Activated naive CD4-positive, alpha-beta T cell treated with anti-CD3 and anti-CD28 coated beads, Interleukin-2, amount 10 ng/mL, durations not matched to agents 7 days and 5 days (primary cell): ENCODE measurements at regions of chr19 and their contacts with region 1.

Region 1: DNA sequence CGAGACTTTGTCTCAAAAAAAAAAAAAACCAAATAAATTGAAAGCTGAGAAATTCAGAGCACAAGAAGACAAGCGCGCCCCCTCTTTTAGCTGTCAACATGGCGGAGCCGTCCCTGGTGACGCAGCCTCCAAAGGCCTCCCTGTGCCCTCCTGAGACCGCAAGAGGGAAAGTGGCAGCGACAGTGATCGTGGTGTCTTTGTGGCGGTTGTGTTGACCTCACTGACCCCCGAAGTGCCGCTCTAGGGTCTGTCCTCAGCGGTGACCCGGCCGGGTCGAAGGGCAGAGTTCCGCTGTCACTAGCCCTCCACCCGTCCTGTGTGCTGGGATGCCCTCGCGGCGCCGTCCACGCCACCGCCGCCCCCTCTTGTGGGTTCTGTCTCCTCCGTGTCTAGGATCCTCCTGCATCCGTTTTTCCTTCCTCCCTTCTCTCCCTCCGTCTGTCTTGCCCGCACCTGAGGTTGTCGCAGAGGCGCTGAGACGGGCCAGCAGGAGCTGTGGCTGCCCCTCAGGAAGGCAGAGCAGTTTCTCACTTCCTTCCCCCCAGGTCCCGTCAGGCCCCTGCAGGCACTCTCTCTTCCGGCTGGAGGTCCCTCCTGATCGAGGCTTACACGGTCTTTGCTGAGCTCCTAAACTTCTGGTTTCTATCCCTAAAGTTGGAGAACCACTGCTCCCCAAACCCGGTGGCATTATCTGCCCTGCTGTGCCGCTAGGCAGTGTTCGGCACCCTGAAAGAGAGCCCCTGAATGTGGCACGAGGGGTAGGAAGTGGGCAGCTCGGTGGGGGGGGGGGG is 7.2 kb downstream of the UHRF1 start:
- DNase-seq: peak; percentile 62
- H3K4me3 Mint-ChIP-seq: peak overlapping the region; percentile 92
- H3K27ac Mint-ChIP-seq: peak overlapping the region; percentile 98
- H3K4me1 Mint-ChIP-seq: peaks cover 62% of the 10 kb centered on the region
- H3K27me3 Mint-ChIP-seq: no peaks in the 10 kb centered on the region

Region 2: DNA sequence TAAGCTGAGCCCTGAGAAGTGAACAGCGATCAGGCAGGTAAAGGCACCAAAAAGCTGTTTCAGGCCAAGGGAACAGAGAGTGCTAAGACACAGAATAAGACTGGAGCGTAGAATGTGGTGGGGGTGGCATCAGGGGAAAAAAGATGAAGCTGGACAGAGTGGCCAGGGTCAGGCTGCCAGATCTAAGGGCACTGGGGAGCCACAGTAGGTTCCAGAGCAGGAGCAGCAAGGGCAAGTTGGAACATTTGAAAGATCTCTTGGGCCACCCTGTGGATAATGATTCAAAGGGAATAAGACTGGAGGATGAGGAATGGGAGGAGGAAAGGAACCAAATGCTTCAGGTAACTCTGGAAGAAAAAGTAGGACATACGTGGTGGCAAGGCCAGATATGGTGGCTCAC is 42.6 kb before region 1 on chr19:
- CTCF ChIA-PET with region 1: interaction called, 80 read pairs
- DNase-seq: no peak
- H3K4me3 Mint-ChIP-seq: no peak overlapping the region
- H3K27ac Mint-ChIP-seq: no peak overlapping the region
- H3K4me1 Mint-ChIP-seq: peaks cover 18% of the 10 kb centered on the region
- H3K27me3 Mint-ChIP-seq: peaks cover 54% of the 10 kb centered on the region